ENCODE measurements at regions of chr11 and their contacts with region 1.

Region 1: DNA sequence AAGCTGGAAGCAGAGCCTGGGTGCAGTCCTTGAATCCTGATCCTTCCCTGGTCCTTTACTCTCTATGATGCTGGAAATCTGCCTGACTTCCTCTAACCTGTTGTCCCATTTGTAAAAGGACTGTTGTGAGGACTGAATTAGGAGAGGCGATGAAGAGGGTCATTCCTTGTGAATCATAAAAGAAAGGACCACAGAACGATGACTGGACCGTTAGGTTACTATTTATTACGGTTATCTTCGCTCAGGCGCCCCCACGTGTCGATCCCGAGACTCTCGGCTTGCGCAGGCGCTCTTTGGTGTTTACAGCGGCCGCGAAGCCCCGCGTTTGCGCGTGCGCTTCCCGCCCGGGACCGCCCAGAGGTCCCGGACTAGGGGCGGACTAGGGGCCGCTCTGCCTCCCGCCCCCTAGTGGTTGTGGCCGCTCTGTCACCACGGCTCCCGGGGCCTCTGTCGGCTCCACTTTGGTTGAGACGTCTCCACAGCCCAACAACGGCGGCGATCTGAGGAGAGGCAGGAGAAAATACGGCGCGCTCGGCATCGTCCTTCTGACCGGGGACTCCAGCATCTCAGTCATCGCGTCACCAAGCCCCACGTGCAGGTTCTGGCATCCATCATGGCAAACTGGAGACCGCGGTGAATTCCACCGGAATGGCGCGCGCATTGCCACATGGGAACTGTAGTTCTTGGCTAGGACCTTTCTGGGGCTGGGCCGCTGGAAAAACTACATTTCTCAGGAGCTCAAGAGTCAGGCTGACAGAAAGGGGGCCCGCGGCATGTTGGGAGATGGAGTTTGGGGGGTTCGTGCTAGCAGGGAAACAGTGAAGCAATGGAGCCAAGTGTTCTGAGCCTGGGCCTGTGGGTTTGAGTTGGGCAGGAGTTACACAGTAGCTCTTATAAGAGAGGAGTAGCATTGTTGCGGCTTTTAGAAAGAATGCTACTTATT is at the start of gene STARD10:
- DNase-seq: peak; percentile 97 to 99
- H3K4me3 ChIP-seq: peak within 1 kb of the TSS; percentile 66
- H3K4me3 Mint-ChIP-seq: peak within 1 kb of the TSS; percentile 82
- H3K27ac Mint-ChIP-seq: peak within 1 kb of the TSS; percentile 91
- H3K4me1 ChIP-seq: peaks cover 26% of the 10 kb centered on the region
- H3K4me1 Mint-ChIP-seq: peaks cover 21% of the 10 kb centered on the region
- H3K27me3 ChIP-seq: no peaks in the 10 kb centered on the region
- H3K27me3 Mint-ChIP-seq: no peaks in the 10 kb centered on the region
- CTCF ChIP-seq: peak; percentile 99 to 100
- total RNA-seq, gene STARD10: 492 and 501 TPM in 2 replicates

Region 2: GRCh38 chr11:72743321-72744221 is 50.1 kb before region 1 on chr11:
- CTCF ChIA-PET with region 1: interaction called, 11 read pairs
- POLR2A ChIA-PET with region 1: no interaction called
- intact Hi-C with region 1: no loop called
- DNase-seq: peak in 1 of 2 experiments; percentile 40
- H3K4me3 ChIP-seq: no peak overlapping the region
- H3K4me3 Mint-ChIP-seq: no peak overlapping the region
- H3K27ac Mint-ChIP-seq: peak overlapping the region; percentile 91
- H3K4me1 ChIP-seq: peaks cover 29% of the 10 kb centered on the region
- H3K4me1 Mint-ChIP-seq: peaks cover 41% of the 10 kb centered on the region
- H3K27me3 ChIP-seq: no peaks in the 10 kb centered on the region
- H3K27me3 Mint-ChIP-seq: no peaks in the 10 kb centered on the region
- CTCF ChIP-seq: no peak

Region 3: GRCh38 chr11:72752088-72752914 is 41.4 kb before region 1 on chr11 and contains the start of gene ARAP1:
- CTCF ChIA-PET with region 1: interaction called, 6 read pairs
- POLR2A ChIA-PET with region 1: interaction called, 7 read pairs
- intact Hi-C with region 1: loop called (anchors 1 kb)
- DNase-seq: peak; percentile 89 to 90
- H3K4me3 ChIP-seq: peak within 1 kb of the TSS; percentile 75
- H3K4me3 Mint-ChIP-seq: peak within 1 kb of the TSS; percentile 89
- H3K27ac Mint-ChIP-seq: peak within 1 kb of the TSS; percentile 94
- H3K4me1 ChIP-seq: peaks cover 30% of the 10 kb centered on the region
- H3K4me1 Mint-ChIP-seq: peaks cover 53% of the 10 kb centered on the region
- H3K27me3 ChIP-seq: no peaks in the 10 kb centered on the region
- H3K27me3 Mint-ChIP-seq: no peaks in the 10 kb centered on the region
- CTCF ChIP-seq: peak in 1 of 2 experiments; percentile 28
- total RNA-seq, gene ARAP1: 87.1 and 102 TPM in 2 replicates

Region 4: GRCh38 chr11:72764503-72764902 is 29.2 kb before region 1 on chr11:
- CTCF ChIA-PET with region 1: interaction called, 10 read pairs
- POLR2A ChIA-PET with region 1: interaction called, 3 read pairs
- intact Hi-C with region 1: loop called (anchors 1 kb)
- DNase-seq: peak; percentile 74 to 78
- H3K4me3 ChIP-seq: no peak overlapping the region
- H3K4me3 Mint-ChIP-seq: no peak overlapping the region
- H3K27ac Mint-ChIP-seq: no peak overlapping the region
- H3K4me1 ChIP-seq: peaks cover 32% of the 10 kb centered on the region
- H3K4me1 Mint-ChIP-seq: peaks cover 38% of the 10 kb centered on the region
- H3K27me3 ChIP-seq: no peaks in the 10 kb centered on the region
- H3K27me3 Mint-ChIP-seq: no peaks in the 10 kb centered on the region
- CTCF ChIP-seq: peak; percentile 59 to 80

Region 5: DNA sequence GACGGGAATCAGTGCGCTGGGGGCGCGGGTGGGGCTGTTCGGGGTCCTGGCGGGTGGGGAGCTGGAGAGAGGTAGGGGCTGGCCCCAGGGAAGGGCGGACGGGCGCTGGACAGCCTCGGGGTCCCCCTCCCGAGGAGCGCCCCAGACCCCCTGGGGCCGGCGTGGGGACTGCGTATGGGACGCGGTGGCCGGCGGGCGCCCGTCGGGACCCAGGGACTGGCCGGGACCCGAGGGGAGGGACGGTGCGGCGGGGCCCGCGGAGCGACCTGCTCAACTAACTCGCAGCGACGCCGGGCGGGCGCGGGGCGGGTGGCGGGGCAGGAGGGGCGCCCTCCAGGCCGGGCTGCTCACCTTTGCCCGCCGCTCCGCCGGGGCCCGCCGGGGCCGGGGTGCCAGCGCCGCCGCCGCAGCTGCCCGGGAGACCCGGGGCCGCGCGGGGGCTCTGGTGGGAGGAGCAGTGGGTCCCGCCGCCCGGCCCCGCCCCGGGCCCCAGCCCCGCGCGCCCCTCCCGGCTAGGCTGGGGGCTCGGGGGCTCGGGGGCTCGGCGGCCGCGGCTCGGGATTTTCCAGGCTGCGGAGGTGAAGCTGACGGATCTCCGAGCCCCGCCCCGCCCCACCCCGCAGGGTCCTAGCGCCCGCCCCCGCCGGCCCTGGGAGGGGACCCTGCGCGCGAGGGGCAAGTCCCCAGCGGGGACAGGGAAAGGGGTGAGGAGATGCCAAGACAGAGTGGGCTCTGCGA is 12.2 kb before region 1 on chr11:
- CTCF ChIA-PET with region 1: interaction called, 74 read pairs
- POLR2A ChIA-PET with region 1: interaction called, 6 read pairs
- intact Hi-C with region 1: loop called (anchors 1 kb)
- DNase-seq: peak; percentile 80
- H3K4me3 ChIP-seq: peak overlapping the region; percentile 88
- H3K4me3 Mint-ChIP-seq: peak overlapping the region; percentile 74
- H3K27ac Mint-ChIP-seq: peak overlapping the region; percentile 99
- H3K4me1 ChIP-seq: peaks cover 85% of the 10 kb centered on the region
- H3K4me1 Mint-ChIP-seq: peaks cover 64% of the 10 kb centered on the region
- H3K27me3 ChIP-seq: no peaks in the 10 kb centered on the region
- H3K27me3 Mint-ChIP-seq: no peaks in the 10 kb centered on the region
- CTCF ChIP-seq: peak in 1 of 2 experiments; percentile 23

Region 6: DNA sequence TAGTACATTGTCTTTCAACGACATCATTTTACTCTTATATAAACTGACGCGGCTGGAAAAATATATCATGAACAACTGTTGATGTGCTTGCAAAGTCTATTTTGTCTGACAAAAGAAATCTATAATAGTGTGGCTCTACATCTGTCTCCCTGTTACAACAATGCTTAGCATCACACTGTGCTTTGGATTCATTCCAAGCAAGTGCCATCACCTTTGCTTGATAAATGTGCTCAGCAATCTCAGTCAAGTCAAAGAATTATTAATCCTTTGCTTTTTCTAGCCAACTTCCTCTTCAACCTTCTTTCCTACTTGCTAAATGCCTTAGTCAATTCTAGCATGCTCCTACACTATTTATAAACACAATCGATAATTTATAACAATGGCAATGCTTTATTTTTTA is 207.9 kb after region 1 on chr11:
- CTCF ChIA-PET with region 1: no interaction called
- POLR2A ChIA-PET with region 1: no interaction called
- intact Hi-C with region 1: no loop called
- DNase-seq: no peak
- H3K4me3 ChIP-seq: no peak overlapping the region
- H3K4me3 Mint-ChIP-seq: no peak overlapping the region
- H3K27ac Mint-ChIP-seq: no peak overlapping the region
- H3K4me1 ChIP-seq: peaks cover 12% of the 10 kb centered on the region
- H3K4me1 Mint-ChIP-seq: peaks cover 7% of the 10 kb centered on the region
- H3K27me3 ChIP-seq: no peaks in the 10 kb centered on the region
- H3K27me3 Mint-ChIP-seq: no peaks in the 10 kb centered on the region
- CTCF ChIP-seq: no peak